GM12878 (cell line): ENCODE measurements at regions of chr1 and their contacts with region 1.

Region 1: GRCh38 chr1:111197598-111198284 is 2.7 kb downstream of the DENND2D start:
- DNase-seq: no peak
- ATAC-seq: peak; percentile 28
- H3K4me3 ChIP-seq: peak overlapping the region; percentile 73
- H3K27ac ChIP-seq: peak overlapping the region; percentile 92
- H3K4me1 ChIP-seq: peaks cover 40% of the 10 kb centered on the region
- H3K27me3 ChIP-seq: no peaks in the 10 kb centered on the region
- CTCF ChIP-seq: peak; percentile 54 to 65 (median 55)
- EP300 ChIP-seq: no peak
- POLR2A ChIP-seq: no peak
- RAD21 ChIP-seq: peak; percentile 58

Region 2: GRCh38 chr1:109931189-109931731 is 1266.5 kb before region 1 on chr1:
- CTCF ChIA-PET with region 1: no interaction called
- POLR2A ChIA-PET with region 1: no interaction called
- RAD21 ChIA-PET with region 1: no interaction called
- SMC1A ChIA-PET with region 1: no interaction called
- in situ Hi-C with region 1: no loop called
- intact Hi-C with region 1: no loop called
- DNase-seq: no peak
- ATAC-seq: peak; percentile 23; the same call in 1 of the 3 replicates
- H3K4me3 ChIP-seq: no peak overlapping the region
- H3K27ac ChIP-seq: no peak overlapping the region
- H3K4me1 ChIP-seq: no peaks in the 10 kb centered on the region
- H3K27me3 ChIP-seq: no peaks in the 10 kb centered on the region
- CTCF ChIP-seq: no peak
- EP300 ChIP-seq: no peak
- POLR2A ChIP-seq: peak; percentile 39; the same call in 1 of the 2 replicates
- RAD21 ChIP-seq: no peak

Region 3: GRCh38 chr1:111127923-111128643 is 69.7 kb before region 1 on chr1:
- CTCF ChIA-PET with region 1: interaction called, 4 read pairs
- POLR2A ChIA-PET with region 1: interaction called, 8 read pairs
- RAD21 ChIA-PET with region 1: interaction called, 8 read pairs
- SMC1A ChIA-PET with region 1: interaction called, 15 read pairs
- in situ Hi-C with region 1: no loop called
- intact Hi-C with region 1: no loop called
- DNase-seq: peak; percentile 81
- ATAC-seq: peak; percentile 90
- H3K4me3 ChIP-seq: 0 out of 2 replicates have a peak overlapping the region, but pooled peaks have one; percentile 45
- H3K27ac ChIP-seq: peak overlapping the region; percentile 94
- H3K4me1 ChIP-seq: peaks cover 43% of the 10 kb centered on the region
- H3K27me3 ChIP-seq: no peaks in the 10 kb centered on the region
- CTCF ChIP-seq: no peak
- EP300 ChIP-seq: peak; percentile 26 to 54; a peak in 1 of 4 replicates
- POLR2A ChIP-seq: no peak
- RAD21 ChIP-seq: no peak

Region 4: GRCh38 chr1:111183308-111184069 is 14.3 kb before region 1 on chr1:
- CTCF ChIA-PET with region 1: interaction called, 14 read pairs
- POLR2A ChIA-PET with region 1: interaction called, 28 read pairs
- RAD21 ChIA-PET with region 1: interaction called, 8 read pairs
- SMC1A ChIA-PET with region 1: interaction called, 68 read pairs
- in situ Hi-C with region 1: no loop called
- intact Hi-C with region 1: no loop called
- DNase-seq: no peak
- ATAC-seq: 0 out of 3 replicates have a peak, but pooled peaks have one; percentile 17
- H3K4me3 ChIP-seq: no peak overlapping the region
- H3K27ac ChIP-seq: no peak overlapping the region
- H3K4me1 ChIP-seq: no peaks in the 10 kb centered on the region
- H3K27me3 ChIP-seq: no peaks in the 10 kb centered on the region
- CTCF ChIP-seq: no peak
- EP300 ChIP-seq: no peak
- POLR2A ChIP-seq: no peak
- RAD21 ChIP-seq: no peak